Right ventricle myocardium inferior (tissue), 1 donor: ENCODE measurements at regions of chr15 and their contacts with region 1.

Region 1: DNA sequence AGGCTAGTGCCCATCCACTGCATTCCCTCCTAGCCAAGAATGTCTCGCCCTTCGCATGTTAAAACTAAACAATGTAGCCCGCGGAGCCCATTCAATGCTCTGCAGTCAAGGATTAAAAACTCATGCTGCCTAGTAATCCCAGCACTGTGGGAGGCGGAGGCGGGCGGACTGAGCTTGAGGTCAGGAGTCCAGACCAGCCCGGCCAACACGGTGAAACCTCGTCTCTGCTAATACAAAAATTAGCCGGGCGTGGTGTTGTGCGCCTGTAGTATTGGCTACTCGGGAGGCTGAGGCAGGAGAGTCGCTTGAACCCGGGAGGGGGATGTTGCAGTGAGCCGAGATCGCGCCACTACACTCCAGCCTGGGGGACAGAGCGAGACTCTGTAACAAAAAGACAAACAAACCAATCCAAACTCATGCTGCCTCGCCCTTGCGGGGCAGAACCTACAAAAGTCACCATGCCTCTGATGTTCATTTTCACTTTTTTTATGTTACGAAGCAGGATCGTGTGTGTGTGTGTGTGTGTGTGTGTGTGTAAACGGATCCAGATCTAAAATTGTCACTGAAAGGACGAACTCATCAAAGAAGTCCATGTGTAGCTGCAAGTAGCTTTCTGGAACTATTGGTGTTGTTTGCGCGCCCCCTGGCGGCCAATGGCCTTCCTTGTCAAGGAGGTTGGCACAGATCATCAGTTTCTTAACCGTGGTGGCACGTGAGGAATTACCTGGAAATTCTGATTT is 54.8 kb upstream of the SPESP1 start:
- DNase-seq: peak; percentile 96
- ATAC-seq: peak; percentile 87

Region 2: GRCh38 chr15:68550481-68551295 is 324.9 kb before region 1 on chr15:
- intact Hi-C with region 1: loop called (anchors 2 kb)
- DNase-seq: peak; percentile 78
- ATAC-seq: no peak

Region 3: GRCh38 chr15:68672781-68673205 is 202.8 kb before region 1 on chr15:
- intact Hi-C with region 1: loop called (anchors 1 kb)
- DNase-seq: no peak
- ATAC-seq: no peak

Region 4: DNA sequence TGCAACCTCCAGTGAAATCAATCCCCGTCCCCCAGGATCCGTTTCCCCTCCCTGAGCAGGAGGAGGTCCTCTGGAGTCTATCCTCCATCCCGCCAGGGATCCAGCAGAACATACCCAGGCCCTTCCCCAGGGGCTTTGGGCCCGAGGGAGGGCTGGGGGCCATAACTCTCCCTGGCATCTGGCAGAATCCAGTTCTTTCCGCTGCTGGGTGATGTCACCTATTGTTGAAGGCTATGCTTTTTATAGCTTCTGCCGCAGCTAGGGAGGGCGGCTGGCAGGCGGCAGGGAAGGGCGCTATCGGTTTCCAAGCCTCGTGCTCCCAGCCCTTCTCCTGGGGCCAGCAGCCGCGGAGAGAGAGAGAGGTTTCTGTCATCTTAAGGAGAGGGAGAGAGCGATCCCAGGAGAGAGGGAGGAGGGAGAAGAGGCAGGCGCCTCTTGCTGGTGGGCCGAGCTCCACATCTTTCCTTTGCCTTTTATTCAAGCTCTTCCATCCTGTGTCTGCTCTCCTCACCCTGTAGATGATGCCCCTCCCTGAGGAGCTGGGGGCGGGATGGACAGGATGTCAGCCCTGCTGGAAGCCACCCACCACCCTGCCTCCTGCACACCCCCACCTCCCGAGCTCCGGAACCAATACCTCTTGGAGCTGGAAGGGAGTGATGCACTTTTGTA is 175.0 kb before region 1 on chr15:
- intact Hi-C with region 1: no loop called
- DNase-seq: peak; percentile 80
- ATAC-seq: peak; percentile 73

Region 5: DNA sequence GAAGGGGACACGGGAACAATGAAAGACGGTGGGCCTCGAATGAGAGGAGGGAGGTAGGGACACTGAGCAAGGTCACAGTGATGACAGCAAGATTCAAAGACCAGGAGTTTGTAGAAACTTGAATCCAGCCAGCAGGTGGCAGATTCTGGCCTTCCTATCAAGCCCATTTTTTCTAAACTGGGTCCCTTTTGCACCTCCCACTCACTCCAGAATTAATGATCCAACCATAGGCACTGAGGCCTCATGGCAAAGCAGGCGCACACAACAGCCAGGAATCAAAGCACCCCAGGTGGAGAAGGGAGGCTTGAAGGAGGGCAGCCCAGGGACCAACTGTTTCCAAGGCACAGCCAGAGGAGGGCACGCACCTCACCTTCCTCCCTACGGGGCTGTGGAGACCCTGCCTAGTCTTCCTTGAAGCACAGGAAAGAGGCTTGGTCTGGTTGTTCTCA is 145.1 kb before region 1 on chr15:
- intact Hi-C with region 1: loop called (anchors 1 kb)
- DNase-seq: no peak
- ATAC-seq: peak; percentile 33

Region 6: DNA sequence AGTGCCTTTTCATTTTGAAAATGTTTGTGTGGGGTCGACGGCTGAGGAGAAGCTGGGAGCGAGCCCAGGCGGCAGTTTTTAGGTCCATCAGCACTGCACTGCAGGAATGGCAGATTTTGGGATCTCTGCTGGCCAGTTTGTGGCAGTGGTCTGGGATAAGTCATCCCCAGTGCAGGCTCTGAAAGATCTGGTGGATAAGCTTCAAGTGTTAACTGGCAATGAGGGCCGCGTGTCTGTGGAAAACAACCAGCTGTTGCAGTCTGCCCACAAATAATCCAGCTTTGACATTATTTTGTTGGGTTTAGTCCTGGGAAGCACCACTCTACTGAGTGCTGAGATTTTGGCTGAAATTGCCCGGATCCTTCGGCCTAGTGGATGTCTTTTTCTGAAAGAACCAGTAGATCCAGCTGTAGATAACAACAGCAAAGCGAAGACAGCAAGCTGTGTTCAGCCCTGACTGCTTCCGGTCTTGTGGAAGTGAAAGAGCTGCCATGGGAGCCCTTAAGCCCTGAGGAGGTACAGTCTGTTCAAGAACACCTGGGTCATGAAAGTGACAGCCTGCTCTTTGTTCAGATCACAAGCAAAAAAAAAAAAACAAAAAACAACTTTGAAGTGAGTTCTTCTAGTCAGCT is 41.7 kb before region 1 on chr15:
- intact Hi-C with region 1: no loop called
- DNase-seq: no peak
- ATAC-seq: no peak

Region 7: GRCh38 chr15:68991723-68992122 is 116.2 kb after region 1 on chr15:
- intact Hi-C with region 1: no loop called
- DNase-seq: no peak
- ATAC-seq: peak; percentile 54